Common myeloid progenitor, CD34-positive (primary cell): ENCODE measurements at regions of chr11 and their contacts with region 1.

Region 1: DNA sequence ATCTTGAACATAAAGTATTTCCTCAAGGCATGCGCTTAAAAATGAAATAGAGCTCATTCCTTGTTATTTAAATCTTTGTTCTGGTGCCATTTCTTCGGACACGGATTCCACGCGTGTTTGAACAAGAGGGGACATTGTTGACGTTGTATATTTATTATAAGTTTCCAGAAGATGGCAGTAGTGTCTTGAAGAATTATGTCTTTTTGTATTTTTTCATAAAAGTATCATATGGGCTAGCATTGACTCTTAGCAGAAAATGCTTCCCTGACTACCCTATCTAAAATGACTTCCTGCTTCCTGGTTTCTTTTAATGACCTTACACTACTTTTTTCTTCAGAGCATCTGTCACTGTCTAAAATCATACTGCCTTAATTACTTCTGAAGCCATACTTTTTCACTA is 20.4 kb downstream of the BIRC2 start:
- DNase-seq: peak; percentile 38 to 68 (median 61)
- H3K4me3 ChIP-seq: no peak overlapping the region
- H3K27ac ChIP-seq: no peak overlapping the region
- H3K4me1 ChIP-seq: no peaks in the 10 kb centered on the region
- H3K27me3 ChIP-seq: no peaks in the 10 kb centered on the region

Region 2: DNA sequence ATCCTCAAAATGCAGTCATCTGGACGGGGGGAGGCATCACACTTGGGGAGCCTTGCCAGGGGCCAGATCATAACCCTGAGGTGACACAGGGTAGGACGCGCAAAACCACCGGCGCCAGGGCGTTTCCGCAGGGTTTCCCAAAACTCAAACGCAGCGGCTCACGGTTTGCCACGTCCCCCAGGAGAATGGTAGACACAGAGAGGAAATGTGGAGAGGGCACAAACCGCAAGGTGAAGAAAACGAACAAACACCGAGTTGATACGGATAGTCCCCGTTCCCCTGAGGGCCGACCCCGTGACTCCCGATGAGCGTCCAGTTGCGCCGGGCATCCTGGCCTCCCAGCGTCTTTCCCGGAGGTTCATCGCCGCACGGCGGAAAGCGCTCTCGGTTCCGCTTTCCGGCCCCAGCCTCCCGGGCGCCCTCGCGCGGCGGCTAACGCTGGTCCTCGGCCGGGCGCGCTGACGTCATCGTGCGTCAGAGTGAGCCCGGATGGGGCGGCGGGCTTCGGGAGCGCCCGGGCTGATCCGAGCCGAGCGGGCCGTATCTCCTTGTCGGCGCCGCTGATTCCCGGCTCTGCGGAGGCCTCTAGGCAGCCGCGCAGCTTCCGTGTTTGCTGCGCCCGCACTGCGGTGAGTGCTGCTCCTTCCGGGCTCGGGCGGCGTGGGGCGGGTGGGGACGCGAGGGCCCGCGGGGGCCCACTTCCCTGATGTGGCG is 20.5 kb before region 1 on chr11 and contains the start of gene BIRC2:
- CTCF ChIA-PET with region 1: interaction called, 20 read pairs
- POLR2A ChIA-PET with region 1: interaction called, 3 read pairs
- DNase-seq: peak; percentile 95 to 98 (median 97)
- H3K4me3 ChIP-seq: peak within 1 kb of the TSS; percentile 84 to 98 (median 94)
- H3K27ac ChIP-seq: peak within 1 kb of the TSS; percentile 95 to 98
- H3K4me1 ChIP-seq: peaks cover 10 to 27% (median 25%) of the 10 kb centered on the region in 4 experiments
- H3K27me3 ChIP-seq: no peaks in the 10 kb centered on the region

Region 3: DNA sequence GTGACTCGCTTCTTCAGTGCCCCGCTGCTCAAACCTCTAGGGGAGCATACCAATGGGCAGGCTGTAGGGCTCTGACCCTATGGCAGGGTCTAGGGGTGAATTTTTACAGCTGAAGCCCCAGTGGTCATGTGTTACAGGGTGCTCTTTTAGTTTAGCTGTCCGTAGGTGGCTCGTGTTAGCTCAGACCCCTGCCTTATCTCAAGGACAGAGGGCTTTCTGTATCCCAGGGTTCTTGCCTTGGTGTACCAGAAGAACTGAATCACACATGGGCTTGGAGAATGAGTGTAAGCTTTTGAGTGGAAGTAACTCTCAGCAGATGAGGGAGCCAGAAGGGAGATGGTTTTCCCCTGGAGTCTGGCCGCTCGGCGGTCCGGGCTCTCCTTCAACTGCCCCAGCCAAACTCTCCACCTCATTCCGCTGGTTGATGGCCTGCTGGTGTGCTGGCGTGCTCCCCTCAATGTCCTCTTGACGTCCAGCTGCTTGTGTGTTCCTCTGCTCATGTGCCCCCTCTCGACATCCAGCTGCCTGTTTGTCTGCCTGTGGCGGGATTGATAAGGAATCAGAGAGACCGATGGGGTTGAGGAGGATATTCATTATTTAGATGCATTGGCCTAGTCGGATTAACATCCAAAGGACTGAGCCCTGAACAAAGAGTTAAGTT is 17.2 kb after region 1 on chr11:
- CTCF ChIA-PET with region 1: interaction called, 13 read pairs
- POLR2A ChIA-PET with region 1: no interaction called
- DNase-seq: peak in 2 of 3 donors; percentile 44 to 65
- H3K4me3 ChIP-seq: no peak overlapping the region
- H3K27ac ChIP-seq: no peak overlapping the region
- H3K4me1 ChIP-seq: peaks cover 6 to 20% (median 9%) of the 10 kb centered on the region in 4 experiments
- H3K27me3 ChIP-seq: no peaks in the 10 kb centered on the region

Region 4: GRCh38 chr11:102390667-102391465 is 23.5 kb after region 1 on chr11:
- CTCF ChIA-PET with region 1: interaction called, 15 read pairs
- POLR2A ChIA-PET with region 1: no interaction called
- DNase-seq: peak; percentile 44 to 61 (median 52)
- H3K4me3 ChIP-seq: no peak overlapping the region
- H3K27ac ChIP-seq: no peak overlapping the region
- H3K4me1 ChIP-seq: peaks cover 0 to 4% (median 3%) of the 10 kb centered on the region in 4 experiments
- H3K27me3 ChIP-seq: no peaks in the 10 kb centered on the region

Region 5: GRCh38 chr11:102495161-102496042 is 128.0 kb after region 1 on chr11:
- CTCF ChIA-PET with region 1: interaction called, 18 read pairs
- POLR2A ChIA-PET with region 1: no interaction called
- DNase-seq: peak; percentile 82 to 90 (median 86)
- H3K4me3 ChIP-seq: no peak overlapping the region
- H3K27ac ChIP-seq: no peak overlapping the region
- H3K4me1 ChIP-seq: no peaks in the 10 kb centered on the region
- H3K27me3 ChIP-seq: no peaks in the 10 kb centered on the region

Region 6: DNA sequence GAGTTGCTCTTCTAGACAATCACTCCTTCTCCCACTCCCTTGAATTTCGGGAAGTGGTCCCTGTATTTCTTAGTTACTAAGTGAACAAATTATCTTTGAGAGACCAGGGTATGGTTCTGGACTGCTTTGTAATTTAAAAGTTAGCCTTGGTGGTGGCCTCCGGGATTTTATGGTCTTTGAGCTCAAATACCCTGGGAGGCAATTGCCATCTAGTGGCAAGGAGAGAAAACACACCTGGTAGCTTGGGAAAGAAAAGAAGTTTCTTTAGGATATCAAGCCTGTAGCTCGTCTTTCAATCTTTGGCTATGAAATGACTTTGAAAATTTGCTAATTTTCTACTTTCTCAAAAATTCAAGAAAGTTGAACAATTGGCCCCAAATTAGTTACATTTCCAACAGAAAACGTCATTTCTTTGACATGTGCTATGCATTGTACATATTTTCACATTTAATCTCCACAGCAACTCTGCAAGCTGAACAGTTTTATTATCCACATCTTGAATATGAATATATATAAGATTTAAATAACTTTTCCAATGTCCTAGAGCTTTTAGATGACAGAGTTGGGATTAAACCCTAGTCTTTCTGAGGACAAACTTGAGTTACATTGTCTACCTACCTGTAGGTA is 299.1 kb after region 1 on chr11:
- CTCF ChIA-PET with region 1: interaction called, 10 read pairs
- POLR2A ChIA-PET with region 1: no interaction called
- DNase-seq: peak; percentile 41 to 56 (median 53)
- H3K4me3 ChIP-seq: no peak overlapping the region
- H3K27ac ChIP-seq: no peak overlapping the region
- H3K4me1 ChIP-seq: no peaks in the 10 kb centered on the region
- H3K27me3 ChIP-seq: no peaks in the 10 kb centered on the region